ENCODE measurements at regions of chr6 and their contacts with region 1.

Region 1: GRCh38 chr6:24431045-24431451 is 28.3 kb downstream of the MRS2 start:
- DNase-seq: no peak
- H3K4me3 ChIP-seq: no peak overlapping the region
- H3K27ac ChIP-seq: no peak overlapping the region
- H3K4me1 ChIP-seq: no peaks in the 10 kb centered on the region
- H3K27me3 ChIP-seq: no peaks in the 10 kb centered on the region
- CTCF ChIP-seq: peak; percentile 57 to 72

Region 2: GRCh38 chr6:24214922-24215452 is 216.1 kb before region 1 on chr6:
- intact Hi-C with region 1: no loop called
- DNase-seq: no peak
- H3K4me3 ChIP-seq: no peak overlapping the region
- H3K27ac ChIP-seq: no peak overlapping the region
- H3K4me1 ChIP-seq: no peaks in the 10 kb centered on the region
- H3K27me3 ChIP-seq: no peaks in the 10 kb centered on the region
- CTCF ChIP-seq: no peak

Region 3: GRCh38 chr6:24522228-24523175 is 91.5 kb after region 1 on chr6:
- intact Hi-C with region 1: loop called (anchors 2 kb)
- DNase-seq: no peak
- H3K4me3 ChIP-seq: no peak overlapping the region
- H3K27ac ChIP-seq: no peak overlapping the region
- H3K4me1 ChIP-seq: no peaks in the 10 kb centered on the region
- H3K27me3 ChIP-seq: no peaks in the 10 kb centered on the region
- CTCF ChIP-seq: no peak

Region 4: DNA sequence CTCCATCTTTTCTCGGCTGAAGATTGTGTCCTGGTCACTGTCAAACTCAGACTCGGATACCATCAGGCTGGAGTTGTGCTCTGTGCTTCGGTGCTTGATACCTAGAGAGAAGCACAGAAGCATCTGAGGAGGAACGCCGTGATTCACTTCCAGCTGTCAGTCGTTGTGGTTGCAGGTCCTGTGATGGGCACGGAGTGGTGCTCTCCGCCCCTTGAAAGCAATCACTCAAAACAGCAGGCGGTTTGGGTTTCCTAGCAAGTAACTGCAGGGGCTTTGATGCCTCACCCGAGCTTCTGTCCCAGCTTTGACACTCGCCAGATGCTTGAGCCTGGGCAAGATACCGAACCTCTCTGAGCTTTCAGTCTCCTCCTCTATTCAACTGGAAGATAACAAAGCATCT is 116.2 kb after region 1 on chr6:
- intact Hi-C with region 1: no loop called
- DNase-seq: no peak
- H3K4me3 ChIP-seq: no peak overlapping the region
- H3K27ac ChIP-seq: no peak overlapping the region
- H3K4me1 ChIP-seq: no peaks in the 10 kb centered on the region
- H3K27me3 ChIP-seq: no peaks in the 10 kb centered on the region
- CTCF ChIP-seq: no peak

Region 5: GRCh38 chr6:25166955-25167748 is 736.1 kb after region 1 on chr6:
- intact Hi-C with region 1: no loop called
- DNase-seq: no peak
- H3K4me3 ChIP-seq: no peak overlapping the region
- H3K27ac ChIP-seq: peak overlapping the region in 1 of 2 donors; percentile 31
- H3K4me1 ChIP-seq: peaks cover 0 to 36% (median 11%) of the 10 kb centered on the region in 4 donors
- H3K27me3 ChIP-seq: no peaks in the 10 kb centered on the region
- CTCF ChIP-seq: no peak

Measured in tibial artery (tissue), 4 donors.